ENCODE measurements at regions of chr19 and their contacts with region 1.

Region 1: DNA sequence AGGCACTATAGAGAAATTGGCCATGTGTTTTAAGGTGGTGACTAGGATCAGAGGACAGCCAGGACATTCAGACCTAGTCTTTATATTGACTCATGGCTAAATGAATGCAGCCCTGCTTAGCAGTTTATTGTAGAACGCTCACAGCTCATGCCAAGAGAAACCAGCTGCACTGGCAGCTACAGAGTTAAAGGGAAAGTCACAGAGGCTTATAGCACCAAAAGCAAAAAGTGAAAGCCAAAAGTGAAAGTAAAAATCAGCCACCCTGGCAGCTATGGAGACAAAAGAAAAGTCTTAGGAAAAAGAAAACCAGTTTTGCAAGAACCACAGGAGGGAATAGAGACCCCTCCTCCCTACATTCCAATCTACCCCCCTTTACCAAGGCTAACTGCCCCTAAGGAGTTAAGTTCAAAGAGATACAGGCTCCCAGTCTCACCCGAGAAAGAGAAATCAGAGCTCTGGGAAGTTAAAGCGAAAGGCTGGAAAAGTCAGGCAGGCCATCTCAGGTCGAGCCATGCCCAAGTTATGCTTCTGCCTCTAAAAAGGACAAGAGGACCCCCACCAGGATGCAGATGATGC is 99.0 kb downstream of the ZNF429 start:
- DNase-seq: no peak
- ATAC-seq: no peak
- H3K4me3 ChIP-seq: no peak overlapping the region; the same call in 1 of the 2 replicates
- H3K27ac ChIP-seq: peak overlapping the region; percentile 96; the same call in 2 of the 3 replicates
- H3K4me1 ChIP-seq: peaks cover 31 to 62% of the 10 kb centered on the region in 2 experiments
- H3K27me3 ChIP-seq: no peaks in the 10 kb centered on the region
- CTCF ChIP-seq: no peak
- EP300 ChIP-seq: no peak
- POLR2A ChIP-seq: no peak
- RAD21 ChIP-seq: no peak

Region 2: GRCh38 chr19:21463449-21464105 is 140.9 kb before region 1 on chr19:
- CTCF ChIA-PET with region 1: no interaction called
- POLR2A ChIA-PET with region 1: no interaction called
- in situ Hi-C with region 1: no loop called
- intact Hi-C with region 1: loop called (anchors 5 kb)
- DNase-seq: peak; percentile 74 to 89 (median 80)
- ATAC-seq: peak; percentile 92
- H3K4me3 ChIP-seq: peak overlapping the region; percentile 61
- H3K27ac ChIP-seq: peak overlapping the region; percentile 73
- H3K4me1 ChIP-seq: peaks cover under 1 to 11% of the 10 kb centered on the region in 2 experiments; a peak in 4 of 5 replicates
- H3K27me3 ChIP-seq: no peaks in the 10 kb centered on the region
- CTCF ChIP-seq: no peak
- EP300 ChIP-seq: no peak
- POLR2A ChIP-seq: peak; percentile 70
- RAD21 ChIP-seq: no peak

Region 3: GRCh38 chr19:21505459-21506451 is 98.7 kb before region 1 on chr19 and contains the start of gene ZNF429:
- CTCF ChIA-PET with region 1: no interaction called
- POLR2A ChIA-PET with region 1: interaction called, 4 read pairs
- in situ Hi-C with region 1: no loop called
- intact Hi-C with region 1: loop called (anchors 2 kb)
- DNase-seq: peak; percentile 83 to 96 (median 89)
- ATAC-seq: peak; percentile 99
- H3K4me3 ChIP-seq: peak within 1 kb of the TSS; percentile 76
- H3K27ac ChIP-seq: peak within 1 kb of the TSS; percentile 96
- H3K4me1 ChIP-seq: peaks cover 9 to 17% of the 10 kb centered on the region in 2 experiments; a peak in 3 of 5 replicates
- H3K27me3 ChIP-seq: no peaks in the 10 kb centered on the region
- CTCF ChIP-seq: 0 out of 6 replicates have a peak, but pooled peaks of 2 of the 3 experiments have one; percentile 8 to 17
- EP300 ChIP-seq: no peak
- POLR2A ChIP-seq: peak; percentile 93
- RAD21 ChIP-seq: peak in 1 of 2 experiments; percentile 38; a peak in 1 of 4 replicates
- polyA plus RNA-seq, gene ZNF429: 16.5 to 24.5 TPM

Region 4: GRCh38 chr19:21593934-21594820 is 10.3 kb before region 1 on chr19:
- CTCF ChIA-PET with region 1: no interaction called
- POLR2A ChIA-PET with region 1: interaction called, 10 read pairs
- in situ Hi-C with region 1: no loop called
- intact Hi-C with region 1: no loop called
- DNase-seq: peak; percentile 39 to 91 (median 61)
- ATAC-seq: peak; percentile 82
- H3K4me3 ChIP-seq: no peak overlapping the region
- H3K27ac ChIP-seq: peak overlapping the region; percentile 85
- H3K4me1 ChIP-seq: peaks cover 13 to 33% of the 10 kb centered on the region in 2 experiments
- H3K27me3 ChIP-seq: no peaks in the 10 kb centered on the region
- CTCF ChIP-seq: no peak
- EP300 ChIP-seq: peak; percentile 75
- POLR2A ChIP-seq: no peak
- RAD21 ChIP-seq: peak in 1 of 2 experiments; percentile 22; a peak in 2 of 4 replicates

Measured in K562 (cell line).